Left colon (tissue), 2 donors: ENCODE measurements at regions of chr1 and their contacts with region 1.

Region 1: DNA sequence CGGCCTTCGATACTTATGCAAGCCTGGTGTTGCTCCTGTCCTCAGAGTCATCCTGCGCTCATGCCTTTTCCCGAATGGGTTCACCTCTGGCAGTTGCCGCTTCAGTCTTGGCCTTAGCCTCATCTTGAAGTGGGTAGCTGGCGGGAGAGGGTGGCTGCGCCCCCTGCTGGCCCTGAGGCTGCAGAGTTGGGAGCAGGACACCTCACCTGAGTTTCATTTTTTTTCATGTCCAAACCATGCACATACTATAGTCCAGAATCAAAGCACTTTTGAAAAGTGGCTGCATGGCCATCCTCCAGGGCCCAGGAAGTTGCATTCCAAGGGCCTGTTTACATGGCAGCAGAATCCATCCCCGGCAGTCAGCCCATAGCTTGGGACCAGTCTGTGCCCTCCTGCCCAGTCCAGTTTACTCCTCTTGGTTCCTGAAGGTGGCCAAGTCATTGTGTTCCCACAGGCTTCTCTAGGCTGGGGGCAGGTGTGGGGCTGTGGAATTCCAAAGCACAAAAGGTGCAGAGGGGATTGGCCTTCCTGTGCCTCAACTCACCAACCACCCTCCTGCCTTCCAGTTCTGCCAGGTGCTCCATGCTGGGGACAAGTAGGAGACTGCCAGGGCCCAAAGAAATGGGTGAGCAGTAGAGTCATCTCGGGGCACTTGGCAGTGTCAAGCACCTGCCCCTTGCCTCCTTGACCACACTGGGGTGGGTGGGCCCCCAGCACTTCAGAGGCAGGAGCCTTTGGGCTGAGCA is 44.0 kb downstream of the YARS1 start:
- DNase-seq: peak; percentile 78 to 89
- ATAC-seq: peak; percentile 75

Region 2: DNA sequence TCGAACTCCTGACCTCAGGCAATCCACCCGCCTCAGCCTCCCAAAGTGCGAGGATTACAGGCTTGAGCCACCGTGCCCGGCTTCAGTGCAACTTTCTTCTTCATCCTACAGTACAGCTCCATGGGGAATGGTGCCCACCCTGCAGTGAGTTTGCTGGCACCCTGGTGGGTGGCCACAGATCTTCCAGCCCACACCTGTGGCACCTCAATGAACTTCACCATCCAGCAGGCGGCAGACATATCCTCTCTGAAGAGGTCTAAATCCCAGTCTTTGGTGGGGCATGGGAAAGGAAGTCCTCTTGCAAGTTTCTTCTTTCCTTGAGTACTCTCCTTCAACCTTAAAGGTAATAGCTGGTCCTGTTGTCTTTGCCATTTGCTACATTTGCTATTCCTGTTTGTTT is 252.0 kb before region 1 on chr1:
- intact Hi-C with region 1: loop called in 1 of 2 experiments (anchors 10 kb)
- DNase-seq: no peak
- ATAC-seq: no peak

Region 3: GRCh38 chr1:32695098-32695904 is 77.9 kb before region 1 on chr1:
- intact Hi-C with region 1: no loop called
- DNase-seq: peak in 1 of 2 donors; percentile 63
- ATAC-seq: peak; percentile 27

Region 4: DNA sequence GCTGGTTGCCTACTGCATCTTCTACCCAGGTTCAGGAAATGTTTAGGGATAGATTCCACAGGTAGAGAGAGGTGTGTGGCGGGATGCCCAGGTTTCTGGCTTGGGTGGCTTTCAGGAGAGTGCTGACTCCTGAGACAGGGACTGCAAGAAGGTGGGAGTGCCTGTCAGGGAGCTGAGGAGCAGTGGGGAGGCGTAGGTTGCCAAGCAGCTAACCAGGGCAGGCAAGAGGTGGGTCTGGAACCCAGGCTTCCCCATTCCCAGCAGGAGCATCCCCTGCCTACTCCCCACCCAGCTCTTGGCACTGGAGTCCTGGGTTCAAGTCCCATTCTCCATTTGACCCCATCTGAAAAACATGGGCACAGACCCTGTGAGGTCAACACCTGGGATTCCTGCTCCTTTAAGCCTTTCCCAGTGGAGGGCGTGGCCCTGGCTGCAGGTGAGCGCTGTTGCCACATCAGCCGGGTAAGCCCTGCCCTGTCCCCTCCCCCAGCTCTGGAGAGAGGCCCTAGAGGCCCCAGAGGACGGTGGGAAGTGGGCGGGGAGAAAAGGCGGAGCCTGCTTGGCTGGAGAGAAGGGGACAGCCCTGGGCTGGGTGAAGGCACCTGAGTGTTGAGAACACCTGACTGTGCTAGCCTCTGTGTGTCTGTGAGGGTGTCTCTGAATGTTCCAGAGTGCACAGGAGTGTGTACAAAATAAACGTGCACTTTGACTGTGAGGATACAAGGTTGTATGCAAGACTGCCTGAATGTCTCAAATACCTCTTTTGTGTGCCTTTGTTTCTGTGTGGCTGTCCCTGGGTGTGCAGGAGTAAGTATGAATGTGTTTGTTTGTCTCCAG is 56.7 kb before region 1 on chr1:
- intact Hi-C with region 1: loop called (anchors 2 to 10 kb)
- DNase-seq: peak; percentile 98
- ATAC-seq: peak; percentile 87

Region 5: DNA sequence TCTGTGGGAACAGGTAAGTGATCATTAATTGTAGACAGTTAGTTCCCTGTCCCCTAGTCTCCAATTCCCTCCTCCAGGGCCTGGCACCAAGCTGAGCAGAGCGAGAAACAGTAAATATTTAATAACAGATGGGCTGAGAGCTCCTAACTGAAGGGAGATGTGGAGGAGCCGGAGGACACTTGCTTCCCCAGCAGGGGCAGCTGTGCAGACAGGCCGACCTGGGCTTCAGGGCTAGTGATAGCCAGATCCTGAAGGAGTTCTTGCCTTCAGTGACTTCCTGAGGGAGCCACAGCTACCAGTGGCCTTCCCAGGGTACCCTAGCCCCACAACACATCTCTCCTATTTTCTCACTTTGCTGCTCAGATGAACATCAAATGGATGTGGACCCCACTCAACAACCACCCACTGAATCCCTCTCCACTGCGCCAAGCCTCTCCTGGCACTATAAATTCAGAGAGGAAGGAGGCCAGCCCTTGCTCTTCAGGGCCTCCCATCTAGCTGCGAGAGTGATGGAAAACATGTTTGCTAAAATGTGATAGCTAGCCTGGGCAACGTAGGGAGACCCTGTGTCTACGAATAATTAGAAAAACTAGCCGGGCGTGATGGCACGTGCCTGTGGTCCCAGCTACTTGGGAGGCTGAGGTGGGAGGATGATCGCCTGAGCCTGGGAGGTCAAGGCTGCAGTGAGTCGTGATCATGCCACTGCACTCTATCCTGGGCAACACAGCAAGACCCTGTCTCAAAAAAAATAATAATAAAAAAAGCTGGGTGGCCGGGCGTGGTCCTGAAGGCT is 43.7 kb before region 1 on chr1:
- intact Hi-C with region 1: no loop called
- DNase-seq: no peak
- ATAC-seq: no peak